Body of pancreas (tissue), 4 donors: ENCODE measurements at regions of chr1 and their contacts with region 1.

Region 1: GRCh38 chr1:20696397-20697329 is 21.1 kb downstream of the KIF17 start:
- DNase-seq: peak; percentile 77 to 86 (median 82)
- ATAC-seq: peak; percentile 93
- H3K4me3 ChIP-seq: peak overlapping the region; percentile 31 to 54
- H3K27ac ChIP-seq: peak overlapping the region; percentile 21 to 75 (median 68)
- H3K4me1 ChIP-seq: peaks cover 6% of the 10 kb centered on the region
- H3K27me3 ChIP-seq: no peaks in the 10 kb centered on the region
- CTCF ChIP-seq: peak; percentile 77 to 91 (median 83)
- POLR2A ChIP-seq: peak in 1 of 3 donors; percentile 10

Region 2: DNA sequence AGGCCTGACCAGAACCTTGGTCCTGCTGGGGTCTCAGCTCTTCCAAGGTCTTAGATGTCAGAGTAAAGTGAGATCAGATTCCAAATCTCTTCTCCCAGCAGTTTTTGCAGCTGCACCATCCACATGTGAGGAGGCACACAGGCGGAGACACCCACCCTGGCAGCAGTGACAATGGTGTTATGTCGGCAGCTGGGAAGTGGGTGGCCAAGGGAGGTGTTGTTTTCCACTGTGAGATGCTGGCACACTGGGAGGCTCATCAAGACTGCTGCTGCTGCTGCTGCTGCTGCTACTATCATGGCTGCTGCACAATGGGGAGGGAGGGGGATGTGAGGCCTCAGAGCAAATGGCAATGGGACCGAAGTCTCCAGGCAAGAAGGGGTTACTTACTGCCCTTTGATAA is 234.3 kb before region 1 on chr1:
- intact Hi-C with region 1: no loop called
- DNase-seq: no peak
- ATAC-seq: no peak
- H3K4me3 ChIP-seq: no peak overlapping the region
- H3K27ac ChIP-seq: no peak overlapping the region
- H3K4me1 ChIP-seq: no peaks in the 10 kb centered on the region
- H3K27me3 ChIP-seq: no peaks in the 10 kb centered on the region
- CTCF ChIP-seq: no peak
- POLR2A ChIP-seq: no peak

Region 3: GRCh38 chr1:20981915-20982314 is 285.3 kb after region 1 on chr1:
- intact Hi-C with region 1: no loop called
- DNase-seq: peak in 1 of 4 donors; percentile 6
- ATAC-seq: peak; percentile 52
- H3K4me3 ChIP-seq: no peak overlapping the region
- H3K27ac ChIP-seq: no peak overlapping the region
- H3K4me1 ChIP-seq: no peaks in the 10 kb centered on the region
- H3K27me3 ChIP-seq: no peaks in the 10 kb centered on the region
- CTCF ChIP-seq: peak; percentile 7 to 62 (median 41)
- POLR2A ChIP-seq: no peak

Region 4: GRCh38 chr1:21198929-21199328 is 502.3 kb after region 1 on chr1:
- intact Hi-C with region 1: loop called (anchors 5 kb)
- DNase-seq: no peak
- ATAC-seq: no peak
- H3K4me3 ChIP-seq: no peak overlapping the region
- H3K27ac ChIP-seq: no peak overlapping the region
- H3K4me1 ChIP-seq: no peaks in the 10 kb centered on the region
- H3K27me3 ChIP-seq: no peaks in the 10 kb centered on the region
- CTCF ChIP-seq: no peak
- POLR2A ChIP-seq: no peak